ENCODE measurements at regions of chr15 and their contacts with region 1.

Region 1: GRCh38 chr15:40217159-40217824 is 21.6 kb upstream of the PAK6 start:
- DNase-seq: peak; percentile 55
- H3K4me3 ChIP-seq: no peak overlapping the region
- CTCF ChIP-seq: peak; percentile 74

Region 2: DNA sequence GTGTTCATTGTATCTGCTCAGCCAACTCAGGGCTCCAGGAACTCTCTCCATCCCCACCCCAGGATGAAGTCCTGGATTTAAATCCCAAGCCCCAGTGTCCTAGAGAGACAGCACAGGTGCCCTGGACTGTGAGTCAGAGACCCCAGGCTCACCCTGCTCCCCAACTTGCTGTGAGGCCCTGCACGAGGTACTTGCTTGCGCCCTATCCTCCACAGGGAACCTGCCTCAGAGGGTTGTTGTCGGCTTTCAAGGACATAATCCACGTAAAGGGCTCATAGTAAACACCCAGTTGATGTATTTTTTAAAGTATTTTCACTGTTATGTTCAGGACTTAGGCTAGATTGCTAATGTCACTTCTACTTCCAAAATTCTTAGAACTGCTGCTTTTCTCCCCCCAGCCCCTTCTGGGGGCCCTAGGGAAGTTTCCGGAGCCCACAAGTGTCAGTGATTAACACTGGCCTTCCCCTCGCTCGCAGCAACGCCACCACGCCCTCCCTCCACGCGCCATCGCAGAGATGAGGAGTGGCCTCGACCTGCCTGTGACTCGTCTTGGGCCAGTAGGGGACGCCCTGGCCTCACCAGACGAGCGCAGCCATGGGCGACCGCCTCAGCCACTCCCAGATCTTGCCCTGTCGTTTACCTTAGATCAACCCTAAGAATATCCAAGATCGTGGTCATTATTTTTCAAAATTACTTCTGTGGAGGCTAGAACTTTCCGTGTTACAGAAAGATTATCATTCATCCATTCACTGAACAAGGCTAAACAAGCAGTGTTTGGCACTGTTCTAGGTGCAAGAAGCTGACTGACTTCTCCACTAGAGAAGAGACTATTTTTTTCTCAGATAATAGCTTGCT is 172.3 kb before region 1 on chr15:
- in situ Hi-C with region 1: loop called (anchors 5 kb)
- DNase-seq: no peak
- H3K4me3 ChIP-seq: peak overlapping the region; percentile 6
- CTCF ChIP-seq: peak; percentile 87

Measured in astrocyte of the cerebellum (primary cell).